A549 (cell line): ENCODE measurements at regions of chr16 and their contacts with region 1.

Region 1: GRCh38 chr16:31458844-31459721 is at the start of gene ARMC5:
- DNase-seq: peak; percentile 93 to 99
- ATAC-seq: peak; percentile 83 to 87
- H3K4me3 ChIP-seq: peak within 1 kb of the TSS; percentile 87
- H3K27ac ChIP-seq: peak within 1 kb of the TSS; percentile 98 to 99
- H3K4me1 ChIP-seq: peaks cover 40% of the 10 kb centered on the region
- CTCF ChIP-seq: peak; percentile 67
- EP300 ChIP-seq: no peak
- POLR2A ChIP-seq: peak; percentile 69
- RAD21 ChIP-seq: peak; percentile 6 to 32; a peak in 2 of 5 replicates
- polyA plus RNA-seq, gene ARMC5: 3.2 and 3.5 TPM in 2 replicates

Region 2: DNA sequence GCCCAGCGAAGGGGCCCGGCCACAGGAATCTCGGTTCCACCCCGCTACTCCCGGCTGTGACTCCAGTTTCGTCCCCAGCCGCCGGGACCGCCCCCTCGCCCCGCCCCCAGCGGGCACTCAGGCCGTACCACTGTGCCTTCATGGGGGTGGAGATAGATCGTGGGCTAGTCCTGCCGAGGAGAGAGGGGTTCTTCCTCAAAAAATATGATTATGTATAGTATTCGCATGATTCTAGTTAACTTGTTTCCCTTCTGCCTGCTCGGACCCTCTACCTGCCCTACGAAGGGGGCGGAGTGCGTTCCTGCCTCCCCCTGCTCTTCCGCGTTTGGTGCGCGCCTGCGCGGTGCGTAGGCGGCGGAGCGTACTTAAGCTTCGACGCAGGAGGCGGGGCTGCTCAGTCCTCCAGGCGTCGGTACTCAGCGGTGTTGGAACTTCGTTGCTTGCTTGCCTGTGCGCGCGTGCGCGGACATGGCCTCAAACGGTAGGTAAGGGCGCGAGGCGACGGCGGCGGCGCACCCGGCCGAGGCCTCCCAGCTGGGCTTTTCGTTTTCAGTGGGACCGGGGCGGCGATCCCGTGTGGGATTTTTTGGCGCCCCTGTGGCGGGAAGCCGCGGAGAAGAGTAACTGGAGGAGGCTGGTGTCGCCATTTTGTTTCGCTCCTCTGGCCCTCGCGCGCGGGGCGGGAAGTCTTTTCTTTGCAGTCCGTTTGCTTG is 279.2 kb before region 1 on chr16 and contains the start of gene FUS:
- CTCF ChIA-PET with region 1: no interaction called
- POLR2A ChIA-PET with region 1: interaction called, 10 read pairs
- DNase-seq: peak; percentile 91 to 93
- ATAC-seq: peak; percentile 75 to 77
- H3K4me3 ChIP-seq: peak within 1 kb of the TSS; percentile 68
- H3K27ac ChIP-seq: peak within 1 kb of the TSS; percentile 92 to 97
- H3K4me1 ChIP-seq: peaks cover 29% of the 10 kb centered on the region
- CTCF ChIP-seq: no peak
- EP300 ChIP-seq: no peak
- POLR2A ChIP-seq: peak; percentile 100
- RAD21 ChIP-seq: no peak
- polyA plus RNA-seq, gene FUS: 168 and 224 TPM in 2 replicates

Region 3: DNA sequence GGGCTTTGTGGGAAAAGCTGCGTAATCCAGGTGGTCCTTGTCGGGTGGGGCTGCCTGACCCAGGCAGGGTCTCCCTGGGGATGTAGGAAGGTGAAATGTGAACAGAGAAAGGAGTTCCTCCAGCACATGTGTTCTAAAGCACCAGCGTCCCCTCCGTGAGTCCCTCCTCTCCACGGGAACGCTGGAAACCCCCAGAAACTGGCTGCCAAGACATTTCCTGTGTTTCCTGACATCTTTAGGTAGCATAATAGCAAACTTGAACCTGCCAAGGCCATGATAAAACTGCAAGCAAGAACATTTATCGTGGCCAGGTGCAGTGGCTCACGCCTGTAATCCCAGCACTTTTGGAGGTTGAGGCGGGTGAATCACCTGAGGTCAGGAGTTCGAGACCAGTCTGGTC is 229.6 kb before region 1 on chr16:
- CTCF ChIA-PET with region 1: no interaction called
- POLR2A ChIA-PET with region 1: no interaction called
- DNase-seq: no peak
- ATAC-seq: no peak
- H3K4me3 ChIP-seq: no peak overlapping the region
- H3K27ac ChIP-seq: no peak overlapping the region
- H3K4me1 ChIP-seq: no peaks in the 10 kb centered on the region
- CTCF ChIP-seq: no peak
- EP300 ChIP-seq: no peak
- POLR2A ChIP-seq: no peak
- RAD21 ChIP-seq: no peak

Region 4: DNA sequence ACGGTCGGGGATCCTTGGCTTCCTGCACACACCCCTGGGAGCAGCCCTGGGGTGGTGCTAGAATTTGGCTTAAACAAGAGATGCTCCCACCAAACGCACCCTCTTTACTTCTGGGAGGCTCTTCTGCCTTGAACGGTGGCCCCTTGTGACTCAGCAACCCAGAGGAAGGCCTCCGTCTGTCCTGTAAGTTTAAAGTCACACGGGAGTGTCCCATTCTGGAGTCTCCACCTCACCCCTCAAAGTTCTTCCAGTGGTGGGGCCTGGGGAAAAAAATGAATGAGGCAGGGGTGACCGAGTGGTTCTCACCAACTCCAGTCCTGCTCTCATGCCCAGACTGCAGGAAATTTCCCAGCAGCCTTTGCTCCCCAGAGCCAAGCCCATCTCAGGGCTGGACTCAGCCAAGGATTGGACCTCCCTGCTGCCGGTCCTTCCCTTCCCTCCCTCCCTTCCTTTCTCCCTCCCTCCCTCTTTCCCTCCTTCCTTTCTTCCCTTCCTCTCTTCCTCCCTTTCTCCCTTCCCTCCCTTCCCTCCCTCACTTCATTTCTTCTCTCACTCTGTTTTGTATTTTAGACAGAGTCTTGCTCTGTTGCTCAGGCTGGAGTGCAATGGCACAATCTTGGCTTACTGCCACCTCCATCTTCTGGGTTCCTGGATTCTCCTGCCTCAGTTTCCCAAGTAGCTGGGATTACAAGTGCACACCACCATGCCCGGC is 54.6 kb before region 1 on chr16:
- CTCF ChIA-PET with region 1: no interaction called
- POLR2A ChIA-PET with region 1: no interaction called
- DNase-seq: peak; percentile 81 to 97
- ATAC-seq: peak; percentile 98 to 99
- H3K4me3 ChIP-seq: peak overlapping the region; percentile 70
- H3K27ac ChIP-seq: peak overlapping the region; percentile 84 to 92
- H3K4me1 ChIP-seq: peaks cover 20% of the 10 kb centered on the region
- CTCF ChIP-seq: no peak
- EP300 ChIP-seq: no peak
- POLR2A ChIP-seq: peak; percentile 91
- RAD21 ChIP-seq: no peak

Region 5: DNA sequence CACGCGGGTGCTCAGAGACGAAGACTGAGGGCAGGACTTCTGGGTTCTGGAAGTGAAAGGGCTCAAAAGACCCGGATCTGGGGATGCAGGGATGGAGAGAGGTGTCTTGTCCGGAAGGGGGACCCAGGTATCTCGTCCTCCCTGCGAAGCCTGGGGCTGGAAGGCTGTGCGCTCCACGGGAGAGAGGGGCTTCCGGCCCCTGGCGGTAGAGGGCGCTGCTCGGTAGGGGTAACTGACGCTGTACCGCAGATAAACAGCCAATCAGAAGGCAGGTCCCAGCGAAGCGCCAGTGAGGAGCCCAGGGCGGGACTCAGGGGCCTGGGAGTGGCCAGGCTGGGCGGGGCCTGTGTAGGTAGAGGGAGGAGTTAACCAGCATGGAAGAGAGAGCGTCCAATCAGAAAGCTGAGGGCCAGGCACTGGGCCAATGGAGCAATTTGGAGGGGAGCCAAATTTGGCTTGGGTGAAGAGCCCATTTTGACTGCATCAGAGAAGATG is 13.7 kb after region 1 on chr16:
- CTCF ChIA-PET with region 1: interaction called, 28 read pairs
- POLR2A ChIA-PET with region 1: interaction called, 13 read pairs
- DNase-seq: peak; percentile 89 to 93
- ATAC-seq: peak; percentile 86 to 95
- H3K4me3 ChIP-seq: peak overlapping the region; percentile 84
- H3K27ac ChIP-seq: peak overlapping the region; percentile 94 to 99
- H3K4me1 ChIP-seq: peaks cover 9% of the 10 kb centered on the region
- CTCF ChIP-seq: peak; percentile 76
- EP300 ChIP-seq: no peak
- POLR2A ChIP-seq: peak; percentile 32; the same call in 1 of the 2 replicates
- RAD21 ChIP-seq: peak; percentile 21 to 28; a peak in 2 of 5 replicates

Region 6: DNA sequence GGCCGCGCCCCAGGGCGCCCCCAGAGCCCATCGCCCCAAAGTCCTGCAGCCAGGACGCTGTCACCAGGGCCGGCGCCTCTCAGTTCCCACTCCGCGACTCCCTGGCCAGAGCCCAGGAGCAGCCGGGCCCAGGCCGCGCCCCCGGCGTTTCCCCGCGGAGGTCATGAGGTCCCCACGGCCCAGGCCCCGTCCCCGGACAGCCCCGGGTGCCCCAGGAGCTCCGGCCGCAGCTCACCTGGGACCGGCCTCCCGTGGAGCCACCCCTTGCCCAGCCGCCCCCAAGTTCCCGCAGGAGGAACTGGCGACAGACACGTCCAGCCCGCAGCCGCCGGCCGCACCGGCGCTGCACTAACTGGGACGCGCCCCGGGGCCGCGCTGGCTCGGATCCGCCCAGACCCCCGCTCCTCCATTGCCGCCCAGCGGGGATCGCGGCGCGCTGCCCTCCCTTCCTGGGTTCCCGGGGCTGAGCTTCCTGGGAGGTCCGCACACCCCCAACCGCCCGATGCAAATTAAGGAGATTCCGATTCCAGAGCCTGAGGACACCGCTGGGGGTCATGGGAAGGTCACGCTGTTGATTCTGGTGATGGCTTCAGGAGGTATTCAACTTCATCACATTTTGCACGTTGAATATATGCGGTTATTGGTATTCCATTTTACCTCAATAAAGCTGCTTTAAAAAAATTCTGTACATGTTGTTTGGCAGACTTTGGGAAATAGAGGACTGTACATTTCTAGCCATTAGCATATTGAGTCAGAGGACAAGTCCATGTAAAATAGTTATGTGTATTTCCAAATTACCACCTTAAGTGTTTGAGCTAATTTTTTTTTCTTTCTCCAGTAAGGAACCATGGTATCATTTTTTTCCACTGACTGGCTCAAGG is 78.5 kb after region 1 on chr16:
- CTCF ChIA-PET with region 1: no interaction called
- POLR2A ChIA-PET with region 1: no interaction called
- DNase-seq: no peak
- ATAC-seq: no peak
- H3K4me3 ChIP-seq: no peak overlapping the region
- H3K27ac ChIP-seq: no peak overlapping the region
- H3K4me1 ChIP-seq: no peaks in the 10 kb centered on the region
- CTCF ChIP-seq: no peak
- EP300 ChIP-seq: no peak
- POLR2A ChIP-seq: no peak
- RAD21 ChIP-seq: no peak

Region 7: GRCh38 chr16:31713071-31713944 is 254.2 kb after region 1 on chr16:
- CTCF ChIA-PET with region 1: no interaction called
- POLR2A ChIA-PET with region 1: interaction called, 16 read pairs
- DNase-seq: peak; percentile 93
- ATAC-seq: peak; percentile 92 to 98
- H3K4me3 ChIP-seq: peak overlapping the region; percentile 82
- H3K27ac ChIP-seq: peak overlapping the region; percentile 90 to 96
- H3K4me1 ChIP-seq: 0 out of 3 replicates have a peak, but pooled peaks cover 6% of the 10 kb centered on the region
- CTCF ChIP-seq: no peak
- EP300 ChIP-seq: no peak
- POLR2A ChIP-seq: peak; percentile 95
- RAD21 ChIP-seq: no peak

Region 8: GRCh38 chr16:31873556-31874365 is 414.7 kb after region 1 on chr16 and contains the start of gene ZNF267:
- CTCF ChIA-PET with region 1: interaction called, 14 read pairs
- POLR2A ChIA-PET with region 1: interaction called, 23 read pairs
- DNase-seq: peak; percentile 88 to 91
- ATAC-seq: peak; percentile 91 to 96
- H3K4me3 ChIP-seq: peak within 1 kb of the TSS; percentile 97
- H3K27ac ChIP-seq: peak within 1 kb of the TSS; percentile 95 to 99
- H3K4me1 ChIP-seq: peaks cover 7% of the 10 kb centered on the region; the same call in 2 of the 3 replicates
- CTCF ChIP-seq: no peak
- EP300 ChIP-seq: no peak
- POLR2A ChIP-seq: peak; percentile 71
- RAD21 ChIP-seq: no peak
- polyA plus RNA-seq, gene ZNF267: 8.3 and 10.2 TPM in 2 replicates